Activated B cell treated with CpG ODN at 0.5 μM for 24 hours (primary cell): ENCODE measurements at regions of chr7 and their contacts with region 1.

Region 1: GRCh38 chr7:91940572-91941341 is at the start of gene AKAP9:
- DNase-seq: peak; percentile 85
- ATAC-seq: peak; percentile 91
- H3K4me3 Mint-ChIP-seq: peak within 1 kb of the TSS; percentile 94
- H3K27ac Mint-ChIP-seq: peak within 1 kb of the TSS; percentile 93
- H3K4me1 Mint-ChIP-seq: peaks cover 42% of the 10 kb centered on the region
- H3K27me3 Mint-ChIP-seq: no peaks in the 10 kb centered on the region
- CTCF ChIP-seq: no peak
- total RNA-seq, gene AKAP9: 54.4 and 58.4 TPM in 2 replicates

Region 2: GRCh38 chr7:90346336-90347125 is 1594.2 kb before region 1 on chr7 and contains the start of gene GTPBP10:
- CTCF ChIA-PET with region 1: no interaction called
- POLR2A ChIA-PET with region 1: interaction called, 3 read pairs
- intact Hi-C with region 1: loop called (anchors 10 kb)
- DNase-seq: peak; percentile 90
- ATAC-seq: peak; percentile 97
- H3K4me3 Mint-ChIP-seq: peak within 1 kb of the TSS; percentile 96
- H3K27ac Mint-ChIP-seq: peak within 1 kb of the TSS; percentile 98
- H3K4me1 Mint-ChIP-seq: peaks cover 35% of the 10 kb centered on the region
- H3K27me3 Mint-ChIP-seq: no peaks in the 10 kb centered on the region
- CTCF ChIP-seq: peak; percentile 37
- total RNA-seq, gene GTPBP10: 28.8 and 29.5 TPM in 2 replicates

Region 3: DNA sequence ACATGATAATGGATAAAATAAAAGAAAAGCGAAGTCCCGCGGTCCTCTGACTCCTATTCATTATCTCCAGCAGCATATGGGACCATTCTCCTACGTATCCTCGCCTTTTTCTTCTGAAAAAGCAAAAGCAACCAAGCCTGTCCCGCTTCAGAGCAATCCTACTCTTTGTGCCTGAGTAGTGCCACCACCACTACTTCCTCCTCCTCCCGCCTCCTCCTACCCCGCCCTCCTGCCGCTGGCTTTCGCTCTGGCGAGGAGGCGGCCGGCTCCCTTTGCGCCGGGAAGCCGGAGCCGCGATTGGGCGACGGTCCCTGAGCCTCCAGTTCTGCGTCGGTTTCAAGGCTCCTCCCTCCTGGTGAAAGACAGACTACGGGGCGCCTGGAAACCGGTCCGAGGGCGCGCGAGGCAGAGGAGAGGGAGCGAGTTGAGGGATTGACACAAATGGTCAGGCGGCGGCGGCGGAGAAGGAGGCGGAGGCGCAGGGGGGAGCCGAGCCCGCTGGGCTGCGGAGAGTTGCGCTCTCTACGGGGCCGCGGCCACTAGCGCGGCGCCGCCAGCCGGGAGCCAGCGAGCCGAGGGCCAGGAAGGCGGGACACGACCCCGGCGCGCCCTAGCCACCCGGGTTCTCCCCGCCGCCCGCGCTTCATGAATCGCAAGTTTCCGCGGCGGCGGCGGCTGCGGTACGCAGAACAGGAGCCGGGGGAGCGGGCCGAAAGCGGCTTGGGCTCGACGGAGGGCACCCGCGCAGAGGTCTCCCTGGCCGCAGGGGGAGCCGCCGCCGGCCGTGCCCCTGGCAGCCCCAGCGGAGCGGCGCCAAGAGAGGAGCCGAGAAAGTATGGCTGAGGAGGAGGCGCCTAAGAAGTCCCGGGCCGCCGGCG is 676.5 kb before region 1 on chr7 and contains the start of gene FZD1:
- CTCF ChIA-PET with region 1: no interaction called
- POLR2A ChIA-PET with region 1: no interaction called
- intact Hi-C with region 1: loop called (anchors 10 kb)
- DNase-seq: peak; percentile 54
- ATAC-seq: peak; percentile 86
- H3K4me3 Mint-ChIP-seq: peak within 1 kb of the TSS; percentile 90
- H3K27ac Mint-ChIP-seq: peak within 1 kb of the TSS; percentile 65
- H3K4me1 Mint-ChIP-seq: peaks cover 21% of the 10 kb centered on the region
- H3K27me3 Mint-ChIP-seq: peaks cover 36% of the 10 kb centered on the region
- CTCF ChIP-seq: no peak
- total RNA-seq, gene FZD1: 0.42 and 0.55 TPM in 2 replicates

Region 4: DNA sequence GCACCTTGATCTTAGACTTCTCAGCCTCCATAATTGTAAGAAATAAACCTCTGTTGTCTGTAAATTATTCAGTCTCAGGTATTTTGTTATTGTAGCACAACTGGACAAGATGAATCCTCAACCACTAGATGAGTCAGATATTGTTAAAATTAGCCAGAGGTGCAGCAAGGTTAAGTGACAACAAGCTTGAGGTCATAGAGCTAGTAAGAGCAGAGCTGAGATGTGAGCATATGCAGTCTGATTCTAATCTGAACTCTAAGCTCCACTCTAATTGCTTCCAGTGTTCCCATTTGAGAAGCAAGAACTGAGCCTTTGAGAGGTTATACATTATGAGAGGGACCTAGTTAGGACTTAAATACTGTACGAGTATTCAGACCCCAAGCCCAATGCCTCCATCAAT is 583.4 kb before region 1 on chr7:
- CTCF ChIA-PET with region 1: no interaction called
- POLR2A ChIA-PET with region 1: no interaction called
- intact Hi-C with region 1: no loop called
- DNase-seq: no peak
- ATAC-seq: no peak
- H3K4me3 Mint-ChIP-seq: no peak overlapping the region
- H3K27ac Mint-ChIP-seq: no peak overlapping the region
- H3K4me1 Mint-ChIP-seq: no peaks in the 10 kb centered on the region
- H3K27me3 Mint-ChIP-seq: peaks cover 10% of the 10 kb centered on the region
- CTCF ChIP-seq: no peak

Region 5: GRCh38 chr7:91922857-91923256 is 17.9 kb before region 1 on chr7:
- CTCF ChIA-PET with region 1: no interaction called
- POLR2A ChIA-PET with region 1: no interaction called
- intact Hi-C with region 1: no loop called
- DNase-seq: no peak
- ATAC-seq: no peak
- H3K4me3 Mint-ChIP-seq: no peak overlapping the region
- H3K27ac Mint-ChIP-seq: no peak overlapping the region
- H3K4me1 Mint-ChIP-seq: no peaks in the 10 kb centered on the region
- H3K27me3 Mint-ChIP-seq: peaks cover 16% of the 10 kb centered on the region
- CTCF ChIP-seq: no peak

Region 6: GRCh38 chr7:92134271-92135051 is 193.7 kb after region 1 on chr7 and contains the start of gene CYP51A1:
- CTCF ChIA-PET with region 1: no interaction called
- POLR2A ChIA-PET with region 1: interaction called, 4 read pairs
- intact Hi-C with region 1: loop called (anchors 1 kb)
- DNase-seq: peak; percentile 97
- ATAC-seq: peak; percentile 83
- H3K4me3 Mint-ChIP-seq: peak within 1 kb of the TSS; percentile 99
- H3K27ac Mint-ChIP-seq: peak within 1 kb of the TSS; percentile 100
- H3K4me1 Mint-ChIP-seq: peaks cover 47% of the 10 kb centered on the region
- H3K27me3 Mint-ChIP-seq: no peaks in the 10 kb centered on the region
- CTCF ChIP-seq: no peak
- total RNA-seq, gene CYP51A1: 90.9 and 92.8 TPM in 2 replicates

Region 7: GRCh38 chr7:92588561-92588960 is 647.8 kb after region 1 on chr7:
- CTCF ChIA-PET with region 1: no interaction called
- POLR2A ChIA-PET with region 1: no interaction called
- intact Hi-C with region 1: loop called (anchors 5 kb)
- DNase-seq: no peak
- ATAC-seq: no peak
- H3K4me3 Mint-ChIP-seq: peak overlapping the region; percentile 80
- H3K27ac Mint-ChIP-seq: peak overlapping the region; percentile 80
- H3K4me1 Mint-ChIP-seq: peaks cover 59% of the 10 kb centered on the region
- H3K27me3 Mint-ChIP-seq: no peaks in the 10 kb centered on the region
- CTCF ChIP-seq: no peak